Dendritic cell treated with granulocyte-macrophage colony-stimulating factor and Interleukin-4, amounts not matched to agents 40 ng/mL and 50 ng/mL, for 4 days (primary cell): ENCODE measurements at regions of chr2 and their contacts with region 1.

Region 1: GRCh38 chr2:7795778-7796563 is 878.8 kb downstream of the RNF144A start:
- H3K4me3 Mint-ChIP-seq: peak overlapping the region; percentile 61
- H3K27ac Mint-ChIP-seq: peak overlapping the region; percentile 90
- H3K4me1 Mint-ChIP-seq: peaks cover 30% of the 10 kb centered on the region
- H3K27me3 Mint-ChIP-seq: no peaks in the 10 kb centered on the region

Region 2: GRCh38 chr2:7450188-7450832 is 345.7 kb before region 1 on chr2:
- intact Hi-C with region 1: no loop called
- H3K4me3 Mint-ChIP-seq: no peak overlapping the region
- H3K27ac Mint-ChIP-seq: no peak overlapping the region
- H3K4me1 Mint-ChIP-seq: no peaks in the 10 kb centered on the region
- H3K27me3 Mint-ChIP-seq: no peaks in the 10 kb centered on the region

Region 3: GRCh38 chr2:7773362-7774360 is 22.3 kb before region 1 on chr2:
- intact Hi-C with region 1: loop called (anchors 2 kb)
- H3K4me3 Mint-ChIP-seq: peak overlapping the region; percentile 58
- H3K27ac Mint-ChIP-seq: peak overlapping the region; percentile 89
- H3K4me1 Mint-ChIP-seq: peaks cover 31% of the 10 kb centered on the region
- H3K27me3 Mint-ChIP-seq: peaks cover 13% of the 10 kb centered on the region